Activated T-helper 2 cell treated with anti-CD3 and anti-CD28 coated beads, Interferon-gamma antibody, Interleukin-2, Interleukin-4, amounts not matched to agents 10 μg/mL and 5 μg/mL and 100 μg/mL, durations not matched to agents 14 hours and 24 hours and 36 hours (primary cell): ENCODE measurements at regions of chr7 and their contacts with region 1.

Region 1: GRCh38 chr7:143240291-143241168 is 18.7 kb downstream of the TAS2R40 start:
- DNase-seq: peak; percentile 63
- H3K4me3 Mint-ChIP-seq: no peak overlapping the region
- H3K27ac Mint-ChIP-seq: peak overlapping the region; percentile 87
- H3K4me1 Mint-ChIP-seq: peaks cover 49% of the 10 kb centered on the region
- H3K27me3 Mint-ChIP-seq: peaks cover 11% of the 10 kb centered on the region

Region 2: DNA sequence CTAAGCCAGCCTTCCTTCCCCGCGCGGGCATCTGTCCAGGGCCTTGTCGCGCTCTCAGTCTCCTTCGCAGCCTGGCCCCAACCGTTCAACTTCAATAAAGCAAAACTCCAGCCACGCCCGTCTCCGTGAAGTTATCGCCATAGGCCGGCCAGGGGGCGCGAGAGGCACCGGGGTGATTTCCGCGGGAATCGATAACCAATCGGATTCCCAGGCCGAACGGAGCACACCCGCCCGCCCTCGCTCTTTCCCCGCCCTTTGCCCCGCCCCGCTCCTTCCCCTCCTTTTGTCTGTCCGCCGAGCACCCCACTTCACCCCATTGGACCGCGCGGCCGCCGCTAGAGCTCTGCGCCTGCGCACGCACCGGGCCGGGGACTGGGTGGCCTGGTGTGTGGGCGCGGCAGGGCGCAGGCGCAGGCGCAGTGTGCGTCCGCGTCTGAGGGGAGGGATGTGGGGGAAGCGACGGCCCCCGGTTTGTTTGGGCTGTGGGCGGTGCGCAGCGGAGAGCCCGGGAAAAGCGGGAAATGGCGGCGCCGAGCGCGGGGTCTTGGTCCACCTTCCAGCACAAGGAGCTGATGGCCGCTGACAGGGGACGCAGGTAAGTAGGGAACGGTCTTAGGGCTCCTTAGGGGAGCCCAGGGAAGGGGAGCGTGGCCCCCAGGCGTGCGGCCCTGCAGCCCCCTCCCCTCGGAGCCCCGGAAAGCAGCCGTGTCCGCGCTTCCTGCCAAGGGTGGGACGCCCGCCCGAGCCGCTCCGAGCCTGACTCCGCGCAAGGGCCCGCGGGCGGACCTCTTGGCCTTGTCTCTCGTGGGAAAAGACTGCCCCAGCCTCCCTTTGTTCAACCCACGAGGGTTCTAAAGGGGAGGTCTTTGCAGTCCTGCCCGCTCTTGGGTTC is 47.7 kb after region 1 on chr7 and contains the start of gene CASP2:
- intact Hi-C with region 1: loop called (anchors 1 kb)
- DNase-seq: peak; percentile 99
- H3K4me3 Mint-ChIP-seq: peak within 1 kb of the TSS; percentile 95
- H3K27ac Mint-ChIP-seq: peak within 1 kb of the TSS; percentile 87
- H3K4me1 Mint-ChIP-seq: peaks cover 47% of the 10 kb centered on the region
- H3K27me3 Mint-ChIP-seq: no peaks in the 10 kb centered on the region
- total RNA-seq, gene CASP2: 116 and 122 TPM in 2 replicates

Region 3: DNA sequence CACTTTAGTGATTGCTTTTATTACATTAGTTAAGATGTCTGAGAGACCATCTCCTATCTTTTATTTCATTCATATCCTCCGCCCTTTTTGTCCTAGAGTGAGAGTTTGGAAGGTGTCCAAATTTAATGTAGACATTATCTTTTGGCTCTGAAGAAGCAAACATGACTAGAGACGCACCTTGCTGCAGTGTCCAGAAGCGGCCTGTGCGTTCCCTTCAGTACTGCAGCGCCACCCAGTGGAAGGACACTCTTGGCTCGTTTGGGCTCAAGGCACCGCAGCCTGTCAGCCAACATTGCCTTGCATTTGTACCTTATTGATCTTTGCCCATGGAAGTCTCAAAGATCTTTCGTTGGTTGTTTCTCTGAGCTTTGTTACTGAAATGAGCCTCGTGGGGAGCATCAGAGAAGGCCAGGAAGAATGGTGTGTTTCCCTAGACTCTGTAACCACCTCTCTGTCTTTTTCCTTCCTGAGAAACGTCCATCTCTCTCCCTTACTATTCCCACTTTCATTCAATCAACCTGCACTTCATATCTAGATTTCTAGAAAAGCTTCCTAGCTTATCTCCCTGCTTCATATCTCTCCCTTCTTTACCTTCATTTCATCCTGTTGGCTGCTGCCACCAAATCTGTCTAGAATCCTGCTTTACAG is 65.0 kb after region 1 on chr7:
- intact Hi-C with region 1: loop called (anchors 1 kb)
- DNase-seq: peak; percentile 36
- H3K4me3 Mint-ChIP-seq: no peak overlapping the region
- H3K27ac Mint-ChIP-seq: peak overlapping the region; percentile 48
- H3K4me1 Mint-ChIP-seq: peaks cover 52% of the 10 kb centered on the region
- H3K27me3 Mint-ChIP-seq: no peaks in the 10 kb centered on the region

Region 4: GRCh38 chr7:143380255-143380645 is 139.7 kb after region 1 on chr7:
- intact Hi-C with region 1: loop called (anchors 1 kb)
- DNase-seq: peak; percentile 81
- H3K4me3 Mint-ChIP-seq: peak overlapping the region; percentile 85
- H3K27ac Mint-ChIP-seq: peak overlapping the region; percentile 89
- H3K4me1 Mint-ChIP-seq: peaks cover 50% of the 10 kb centered on the region
- H3K27me3 Mint-ChIP-seq: no peaks in the 10 kb centered on the region

Region 5: DNA sequence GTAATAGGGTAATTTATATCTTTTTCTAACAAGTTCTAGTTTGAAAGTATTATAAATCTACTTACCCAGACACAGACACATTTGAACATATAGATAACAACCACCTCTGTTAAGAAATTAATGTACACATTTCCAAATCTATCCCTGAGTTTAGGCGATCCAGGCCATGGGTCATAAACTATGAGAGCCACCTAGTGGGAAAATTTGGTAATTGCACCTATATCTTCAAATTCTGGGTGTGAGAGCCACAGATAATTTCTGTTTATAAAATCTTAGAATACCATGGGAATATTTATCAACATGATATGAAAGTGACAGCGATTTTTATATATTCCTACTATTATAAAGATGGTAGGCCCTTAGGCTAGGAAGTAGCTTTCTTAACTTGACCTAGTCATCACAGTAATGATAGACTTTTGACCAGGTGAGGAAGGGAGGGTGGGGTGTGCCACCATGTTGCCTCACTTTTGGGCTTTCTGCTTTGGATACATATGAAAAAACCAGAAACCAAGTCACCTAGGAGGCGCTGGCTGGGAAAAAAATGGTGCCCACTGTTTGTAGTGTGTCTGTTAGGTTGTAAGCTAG is 176.1 kb after region 1 on chr7:
- intact Hi-C with region 1: loop called (anchors 1 kb)
- DNase-seq: no peak
- H3K4me3 Mint-ChIP-seq: no peak overlapping the region
- H3K27ac Mint-ChIP-seq: no peak overlapping the region
- H3K4me1 Mint-ChIP-seq: no peaks in the 10 kb centered on the region
- H3K27me3 Mint-ChIP-seq: peaks cover 26% of the 10 kb centered on the region